ENCODE measurements at regions of chr3 and their contacts with region 1.

Region 1: DNA sequence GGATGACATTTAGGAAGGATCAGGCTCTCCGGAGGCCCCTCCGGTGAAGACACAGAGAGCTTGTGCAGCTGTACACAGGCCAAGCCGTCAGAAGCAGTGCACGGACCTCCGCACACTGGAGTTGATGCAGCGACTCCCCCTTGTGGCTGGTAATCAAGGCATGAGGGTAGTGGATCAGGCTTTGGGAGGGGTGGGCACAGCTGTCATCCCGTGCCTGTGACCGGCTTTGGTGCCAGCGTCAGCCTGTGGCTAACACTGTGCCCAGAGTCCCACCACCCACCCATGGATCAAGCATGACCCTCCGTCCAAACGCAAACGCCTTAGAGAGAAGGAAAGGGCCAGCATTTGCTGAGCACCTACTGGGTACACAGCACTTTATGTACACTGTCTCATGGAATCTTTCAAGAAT is 8.2 kb upstream of the GRIP2 start:
- DNase-seq: no peak
- ATAC-seq: peak; percentile 86

Region 2: GRCh38 chr3:14203521-14204079 is 344.7 kb before region 1 on chr3:
- intact Hi-C with region 1: loop called (anchors 5 kb)
- DNase-seq: no peak
- ATAC-seq: peak; percentile 72

Region 3: GRCh38 chr3:14508961-14509795 is 39.1 kb before region 1 on chr3:
- intact Hi-C with region 1: loop called (anchors 1 kb)
- DNase-seq: peak; percentile 85
- ATAC-seq: peak; percentile 73

Region 4: DNA sequence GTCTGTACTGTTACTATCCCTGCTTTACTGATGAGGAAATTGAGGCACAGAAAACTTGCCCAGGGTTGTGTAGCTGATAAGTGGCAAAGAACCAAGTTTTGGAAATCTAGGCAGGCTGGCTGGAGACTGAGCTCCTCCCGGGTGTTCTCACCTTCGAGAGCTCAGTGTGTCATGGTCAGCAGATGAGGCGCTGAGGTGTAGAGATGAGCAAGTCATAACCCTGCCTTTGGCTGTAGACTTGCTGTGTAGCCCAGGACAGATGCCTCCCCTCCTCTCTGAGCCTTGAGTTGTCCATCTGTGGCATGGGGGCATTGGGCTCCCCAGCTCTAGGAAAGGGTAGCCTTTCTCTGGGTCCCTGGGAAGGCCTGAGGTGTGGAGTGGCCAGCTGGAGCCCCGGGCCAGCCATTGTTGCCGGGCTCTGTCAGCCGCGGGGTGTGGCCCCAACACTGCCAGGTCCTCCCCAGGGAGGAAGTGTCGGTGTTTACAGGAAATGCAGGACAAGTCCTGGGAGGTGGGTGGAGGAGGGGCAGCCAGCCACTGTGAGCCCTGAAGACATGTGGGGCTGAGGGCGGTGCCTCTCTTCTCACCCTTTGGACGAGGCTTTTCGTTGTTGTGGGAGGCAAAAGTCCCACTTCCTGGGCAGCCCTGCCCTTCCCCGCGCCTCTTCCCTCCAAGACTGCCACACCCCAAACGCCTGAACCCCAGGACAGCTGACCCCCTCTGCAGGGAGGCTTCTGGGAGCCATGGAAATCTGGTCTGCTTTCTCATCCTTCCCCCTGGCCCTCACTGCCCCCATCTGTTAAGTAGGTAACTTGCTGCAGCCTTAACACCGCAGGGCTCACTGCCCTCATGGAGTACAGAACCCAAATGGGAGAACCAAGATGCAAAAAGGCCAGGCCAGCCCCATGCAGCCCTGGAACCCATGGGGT is 299.6 kb after region 1 on chr3:
- intact Hi-C with region 1: no loop called
- DNase-seq: no peak
- ATAC-seq: peak; percentile 33